ENCODE measurements at regions of chr19 and their contacts with region 1.

Region 1: DNA sequence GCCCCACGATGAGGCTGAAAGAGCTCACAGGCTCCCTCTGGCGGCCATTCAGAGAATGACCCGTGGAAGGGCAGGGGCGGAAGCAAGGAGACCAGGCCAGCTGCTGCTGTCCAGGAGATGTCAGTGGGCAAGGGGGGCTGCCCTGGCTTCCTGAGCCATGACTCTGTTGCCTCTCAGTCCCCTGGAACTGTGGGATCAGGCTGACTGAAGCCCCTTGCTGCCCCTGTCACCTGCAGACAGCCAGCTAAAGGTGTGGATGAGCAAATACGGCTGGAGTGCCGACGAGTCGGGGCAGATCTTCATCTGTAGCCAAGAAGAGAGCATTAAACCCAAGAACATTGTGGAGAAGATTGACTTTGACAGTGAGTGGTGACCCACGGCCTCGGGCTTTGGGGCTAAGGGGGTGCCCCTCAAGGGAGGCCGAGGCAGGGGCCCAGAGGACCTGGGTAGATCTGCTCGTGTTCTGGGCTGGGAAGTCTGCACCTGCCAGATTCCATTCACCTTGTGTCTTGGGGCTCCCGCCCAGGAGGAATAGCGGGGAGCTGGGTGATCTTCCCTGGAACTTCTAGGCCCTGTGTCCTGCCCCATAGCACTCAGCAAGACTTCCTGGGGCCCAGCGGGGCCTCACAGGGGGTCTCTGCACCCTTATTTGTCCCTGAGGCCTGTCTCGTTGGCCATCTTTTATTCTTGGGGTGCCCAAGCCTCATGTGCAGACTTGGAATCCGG is 12.5 kb upstream of the ACTN4 start:
- DNase-seq: peak; percentile 42 to 79 (median 58)
- ATAC-seq: peak; percentile 64
- H3K4me3 ChIP-seq: no peak overlapping the region
- H3K4me3 Mint-ChIP-seq: peak overlapping the region in 9 of 10 donors; percentile 21 to 65 (median 47)
- H3K27ac ChIP-seq: no peak overlapping the region
- H3K27ac Mint-ChIP-seq: peak overlapping the region; percentile 2 to 81 (median 69)
- H3K4me1 ChIP-seq: peaks cover 23 to 24% of the 10 kb centered on the region in 2 donors
- H3K4me1 Mint-ChIP-seq: peaks cover 14 to 40% (median 35%) of the 10 kb centered on the region in 7 donors
- H3K27me3 ChIP-seq: no peaks in the 10 kb centered on the region
- H3K27me3 Mint-ChIP-seq: no peaks in the 10 kb centered on the region

Region 2: DNA sequence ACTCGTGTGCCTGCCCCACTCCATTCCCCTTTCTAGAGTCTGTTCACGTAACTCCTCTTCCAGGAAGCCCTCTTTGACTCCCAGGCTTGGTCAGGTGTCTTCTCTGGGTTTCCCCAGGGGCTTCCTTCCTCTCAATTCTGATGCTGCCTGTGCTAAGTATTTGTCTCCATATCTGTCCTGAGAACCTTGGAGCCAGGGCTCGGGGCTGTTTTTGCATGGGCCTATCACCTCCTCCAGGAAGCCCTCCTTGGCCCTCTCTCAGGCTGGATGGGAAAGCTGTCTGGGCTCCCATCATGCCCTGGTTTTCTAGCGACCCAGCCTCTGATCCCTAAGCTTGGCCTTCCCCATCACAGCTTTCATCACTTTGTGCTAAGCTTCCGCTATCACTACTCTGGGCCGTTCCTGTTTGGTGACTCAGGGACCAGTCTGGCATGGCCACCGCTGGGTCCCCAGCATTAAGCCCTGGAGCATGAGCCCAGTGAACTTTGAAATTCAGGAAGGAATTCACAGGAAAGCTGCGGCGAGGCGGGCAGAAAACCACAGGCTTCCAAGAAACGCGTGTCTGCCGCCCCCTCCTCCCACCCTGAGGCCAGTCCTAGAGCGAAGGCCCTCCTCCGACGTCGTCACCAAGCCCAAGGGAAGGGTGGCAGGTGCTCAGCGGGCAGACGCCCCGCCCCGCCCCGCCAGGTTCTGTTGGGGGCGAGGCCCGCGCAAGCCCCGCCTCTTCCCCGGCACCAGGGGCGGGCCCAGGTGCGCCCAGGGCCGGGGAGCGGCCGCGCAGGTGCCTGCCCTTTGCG is 371.0 kb before region 1 on chr19:
- CTCF ChIA-PET with region 1: no interaction called
- POLR2A ChIA-PET with region 1: no interaction called
- intact Hi-C with region 1: no loop called
- DNase-seq: peak; percentile 71 to 89 (median 80)
- ATAC-seq: peak; percentile 93
- H3K4me3 ChIP-seq: peak overlapping the region; percentile 77
- H3K4me3 Mint-ChIP-seq: peak overlapping the region; percentile 81 to 93 (median 88)
- H3K27ac ChIP-seq: peak overlapping the region; percentile 77
- H3K27ac Mint-ChIP-seq: peak overlapping the region in 8 of 9 donors; percentile 52 to 93 (median 70)
- H3K4me1 ChIP-seq: peaks cover 4 to 10% of the 10 kb centered on the region in 2 donors
- H3K4me1 Mint-ChIP-seq: peaks cover 17 to 44% (median 39%) of the 10 kb centered on the region in 7 donors
- H3K27me3 ChIP-seq: no peaks in the 10 kb centered on the region
- H3K27me3 Mint-ChIP-seq: peaks cover 0 to 5% (median 2%) of the 10 kb centered on the region in 5 donors

Region 3: DNA sequence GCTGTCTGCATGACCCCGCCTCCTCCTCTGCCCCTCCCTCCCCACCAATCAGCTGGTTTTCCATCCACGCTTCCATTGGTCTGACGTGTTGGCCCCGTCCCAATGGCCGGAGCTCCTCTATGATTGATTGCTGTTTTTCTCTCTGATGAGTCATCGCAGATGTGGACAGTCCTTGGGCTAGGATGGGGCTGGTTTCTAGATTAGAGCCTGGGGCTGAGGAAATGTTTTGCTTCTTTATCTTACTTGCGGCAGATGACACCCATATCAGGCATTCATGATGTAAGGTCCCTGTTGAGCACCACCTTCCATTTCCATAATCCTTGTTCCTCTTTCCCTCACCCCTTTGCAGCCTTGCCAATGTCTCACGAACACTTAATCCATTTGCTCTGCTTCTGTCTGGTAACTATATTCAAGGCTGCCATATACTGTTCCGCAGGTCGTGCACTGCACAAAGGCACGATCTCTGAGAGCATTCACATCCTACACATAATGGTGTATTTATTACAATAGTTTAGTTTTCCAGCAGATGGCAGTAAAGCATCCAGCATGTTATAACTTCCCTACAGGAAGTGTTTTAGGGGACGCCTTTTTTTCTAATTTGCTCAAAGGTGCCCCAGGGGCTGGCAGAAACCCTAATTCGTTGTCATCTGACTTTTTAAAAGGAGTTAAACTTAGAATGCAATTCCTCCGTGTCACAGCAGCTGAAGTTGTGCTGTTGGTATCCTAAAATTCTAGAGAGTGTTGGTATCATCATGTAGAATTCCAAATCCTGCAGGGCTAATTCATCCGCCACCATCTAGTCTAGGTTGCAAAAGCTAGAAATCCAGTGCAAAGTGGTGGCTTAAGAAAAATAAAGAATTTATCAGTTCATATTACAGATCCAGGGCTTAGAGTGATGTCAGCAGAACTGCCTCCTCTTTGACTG is 90.6 kb before region 1 on chr19:
- CTCF ChIA-PET with region 1: interaction called, 8 read pairs
- POLR2A ChIA-PET with region 1: interaction called, 4 read pairs
- intact Hi-C with region 1: loop called (anchors 1 kb)
- DNase-seq: peak in 8 of 9 donors; percentile 36 to 68 (median 53)
- ATAC-seq: peak; percentile 88
- H3K4me3 ChIP-seq: no peak overlapping the region
- H3K4me3 Mint-ChIP-seq: peak overlapping the region in 7 of 10 donors; percentile 0 to 65 (median 45)
- H3K27ac ChIP-seq: no peak overlapping the region
- H3K27ac Mint-ChIP-seq: peak overlapping the region in 7 of 9 donors; percentile 1 to 85 (median 13)
- H3K4me1 ChIP-seq: peaks cover 4 to 14% of the 10 kb centered on the region in 2 donors
- H3K4me1 Mint-ChIP-seq: peaks cover 9 to 34% (median 19%) of the 10 kb centered on the region in 7 donors
- H3K27me3 ChIP-seq: no peaks in the 10 kb centered on the region
- H3K27me3 Mint-ChIP-seq: no peaks in the 10 kb centered on the region

Region 4: GRCh38 chr19:38618590-38619360 is 16.1 kb before region 1 on chr19 and contains the start of gene EIF3K:
- CTCF ChIA-PET with region 1: interaction called, 9 read pairs
- POLR2A ChIA-PET with region 1: interaction called, 15 read pairs
- intact Hi-C with region 1: loop called in 1 of 2 experiments (anchors 2 kb)
- DNase-seq: peak; percentile 94 to 99 (median 96)
- ATAC-seq: peak; percentile 86
- H3K4me3 ChIP-seq: peak within 1 kb of the TSS; percentile 96
- H3K4me3 Mint-ChIP-seq: peak within 1 kb of the TSS; percentile 95 to 100 (median 98)
- H3K27ac ChIP-seq: peak within 1 kb of the TSS; percentile 99
- H3K27ac Mint-ChIP-seq: peak within 1 kb of the TSS; percentile 89 to 100 (median 97)
- H3K4me1 ChIP-seq: peaks cover 33 to 40% of the 10 kb centered on the region in 2 donors
- H3K4me1 Mint-ChIP-seq: peaks cover 38 to 61% (median 44%) of the 10 kb centered on the region in 7 donors
- H3K27me3 ChIP-seq: no peaks in the 10 kb centered on the region
- H3K27me3 Mint-ChIP-seq: no peaks in the 10 kb centered on the region
- total RNA-seq, gene EIF3K: 294 to 405 (median 337) TPM

Region 5: DNA sequence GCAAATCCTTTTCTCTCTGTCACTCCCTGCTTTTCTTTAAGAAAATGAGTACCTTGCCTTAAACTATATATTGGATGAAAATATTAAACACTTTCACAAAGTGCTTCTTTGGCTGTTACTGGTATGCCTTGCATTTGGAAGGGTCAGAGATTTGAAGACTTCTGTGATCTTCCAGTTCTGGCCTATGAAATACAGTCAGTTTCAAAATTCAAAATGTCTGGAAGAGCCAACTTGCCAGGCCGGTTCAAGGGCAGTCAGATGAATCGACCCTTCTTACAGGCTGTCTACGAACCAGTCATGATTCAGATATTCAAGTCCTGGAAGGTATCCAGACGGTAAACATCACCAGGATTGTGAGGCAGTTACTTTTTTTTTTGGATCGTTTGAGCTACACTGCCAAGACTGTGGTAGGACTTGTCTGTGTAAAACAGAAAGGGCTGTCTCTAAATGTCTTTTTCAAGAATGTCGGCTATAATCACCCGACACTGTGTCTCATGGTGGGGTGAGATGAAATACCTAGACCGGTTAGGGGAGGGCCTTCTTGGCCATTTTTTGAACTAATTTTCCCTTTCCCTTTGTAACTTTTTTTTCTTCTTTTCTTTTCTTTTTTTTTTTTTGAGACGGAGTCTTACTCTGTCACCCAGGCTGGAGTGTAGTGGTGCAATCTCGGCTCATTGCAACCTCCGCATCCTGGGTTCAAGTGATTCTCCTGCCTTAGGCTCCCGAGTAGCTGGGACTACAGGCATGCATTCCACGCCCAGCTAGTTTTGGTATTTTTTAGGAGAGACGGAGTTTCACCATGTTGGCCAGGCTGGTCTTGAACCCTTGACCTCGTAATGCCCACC is 23.8 kb after region 1 on chr19:
- CTCF ChIA-PET with region 1: interaction called, 3 read pairs
- POLR2A ChIA-PET with region 1: no interaction called
- intact Hi-C with region 1: loop called in 1 of 2 experiments (anchors 1 kb)
- DNase-seq: no peak
- ATAC-seq: no peak
- H3K4me3 ChIP-seq: no peak overlapping the region
- H3K4me3 Mint-ChIP-seq: peak overlapping the region in 4 of 10 donors; percentile 9 to 76 (median 20)
- H3K27ac ChIP-seq: no peak overlapping the region
- H3K27ac Mint-ChIP-seq: no peak overlapping the region
- H3K4me1 ChIP-seq: peaks cover 36 to 67% of the 10 kb centered on the region in 2 donors
- H3K4me1 Mint-ChIP-seq: peaks cover 22 to 73% (median 50%) of the 10 kb centered on the region in 7 donors
- H3K27me3 ChIP-seq: peaks cover 0 to 19% of the 10 kb centered on the region in 2 donors
- H3K27me3 Mint-ChIP-seq: peaks cover 0 to 65% (median 34%) of the 10 kb centered on the region in 5 donors

Region 6: GRCh38 chr19:38704488-38705026 is 69.6 kb after region 1 on chr19:
- CTCF ChIA-PET with region 1: no interaction called
- POLR2A ChIA-PET with region 1: no interaction called
- intact Hi-C with region 1: loop called in 1 of 2 experiments (anchors 2 kb)
- DNase-seq: no peak
- ATAC-seq: no peak
- H3K4me3 ChIP-seq: no peak overlapping the region
- H3K4me3 Mint-ChIP-seq: no peak overlapping the region
- H3K27ac ChIP-seq: no peak overlapping the region
- H3K27ac Mint-ChIP-seq: no peak overlapping the region
- H3K4me1 ChIP-seq: no peaks in the 10 kb centered on the region
- H3K4me1 Mint-ChIP-seq: no peaks in the 10 kb centered on the region
- H3K27me3 ChIP-seq: no peaks in the 10 kb centered on the region
- H3K27me3 Mint-ChIP-seq: no peaks in the 10 kb centered on the region

Region 7: GRCh38 chr19:38869856-38870607 is 235.1 kb after region 1 on chr19:
- CTCF ChIA-PET with region 1: interaction called, 3 read pairs
- POLR2A ChIA-PET with region 1: interaction called, 3 read pairs
- intact Hi-C with region 1: loop called in 1 of 2 experiments (anchors 5 kb)
- DNase-seq: peak; percentile 90 to 96 (median 94)
- ATAC-seq: peak; percentile 98
- H3K4me3 ChIP-seq: peak overlapping the region; percentile 85
- H3K4me3 Mint-ChIP-seq: peak overlapping the region; percentile 84 to 94 (median 91)
- H3K27ac ChIP-seq: peak overlapping the region; percentile 77
- H3K27ac Mint-ChIP-seq: peak overlapping the region; percentile 73 to 97 (median 88)
- H3K4me1 ChIP-seq: peaks cover 26 to 31% of the 10 kb centered on the region in 2 donors
- H3K4me1 Mint-ChIP-seq: peaks cover 26 to 63% (median 41%) of the 10 kb centered on the region in 7 donors
- H3K27me3 ChIP-seq: no peaks in the 10 kb centered on the region
- H3K27me3 Mint-ChIP-seq: no peaks in the 10 kb centered on the region